Dendritic cell treated with granulocyte-macrophage colony-stimulating factor and Interleukin-4, amounts not matched to agents 40 ng/mL and 50 ng/mL, for 4 days (primary cell): ENCODE measurements at regions of chr14 and their contacts with region 1.

Region 1: DNA sequence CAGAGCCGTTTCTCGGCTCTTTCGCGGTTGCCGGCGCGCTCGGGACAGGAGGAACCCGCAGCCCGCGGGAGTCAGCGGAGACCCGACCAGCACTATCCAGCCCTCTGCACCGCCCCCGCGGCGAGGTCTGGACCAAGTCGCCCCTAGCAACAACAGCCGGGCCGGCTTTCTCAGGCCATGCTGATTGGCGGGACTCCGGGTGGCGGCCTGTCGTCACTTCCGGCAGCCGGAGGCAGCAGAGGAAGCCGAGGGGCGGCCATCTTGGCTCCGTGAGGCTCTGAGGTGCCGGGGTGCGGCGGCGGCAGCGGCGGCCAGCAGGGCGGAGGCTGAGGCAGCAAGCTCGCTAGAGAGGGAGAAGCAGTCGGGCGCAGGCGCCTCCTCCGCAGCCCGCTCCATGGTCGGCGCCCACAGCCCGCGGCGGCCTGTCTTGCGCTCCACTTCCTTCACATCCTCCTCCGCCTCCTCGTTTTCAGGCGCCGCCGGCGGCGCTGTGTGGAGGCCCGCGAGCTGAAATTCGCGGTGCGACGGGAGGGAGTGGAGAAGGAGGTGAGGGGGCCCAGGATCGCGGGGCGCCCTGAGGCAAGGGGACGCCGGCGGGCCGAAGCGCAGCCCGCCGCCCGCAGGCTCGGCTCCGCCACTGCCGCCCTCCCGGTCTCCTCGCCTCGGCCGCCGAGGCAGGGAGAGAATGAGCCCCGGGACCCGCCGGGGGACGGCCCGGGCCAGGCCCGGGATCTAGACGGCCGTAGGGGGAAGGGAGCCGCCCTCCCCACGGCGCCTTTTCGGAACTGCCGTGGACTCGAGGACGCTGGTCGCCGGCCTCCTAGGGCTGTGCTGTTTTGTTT is at the start of gene MARK3:
- H3K4me3 Mint-ChIP-seq: peak within 1 kb of the TSS; percentile 90
- H3K27ac Mint-ChIP-seq: peak within 1 kb of the TSS; percentile 91
- H3K4me1 Mint-ChIP-seq: peaks cover 44% of the 10 kb centered on the region
- H3K27me3 Mint-ChIP-seq: no peaks in the 10 kb centered on the region

Region 2: GRCh38 chr14:103333754-103334643 is 51.4 kb before region 1 on chr14 and contains the start of gene EIF5:
- intact Hi-C with region 1: loop called (anchors 2 kb)
- H3K4me3 Mint-ChIP-seq: peak within 1 kb of the TSS; percentile 84
- H3K27ac Mint-ChIP-seq: peak within 1 kb of the TSS; percentile 96
- H3K4me1 Mint-ChIP-seq: peaks cover 58% of the 10 kb centered on the region
- H3K27me3 Mint-ChIP-seq: no peaks in the 10 kb centered on the region

Region 3: GRCh38 chr14:103349982-103350381 is 35.4 kb before region 1 on chr14:
- intact Hi-C with region 1: loop called (anchors 5 kb)
- H3K4me3 Mint-ChIP-seq: no peak overlapping the region
- H3K27ac Mint-ChIP-seq: no peak overlapping the region
- H3K4me1 Mint-ChIP-seq: no peaks in the 10 kb centered on the region
- H3K27me3 Mint-ChIP-seq: peaks cover 7% of the 10 kb centered on the region

Region 4: GRCh38 chr14:103436533-103436932 is 51.2 kb after region 1 on chr14:
- intact Hi-C with region 1: no loop called
- H3K4me3 Mint-ChIP-seq: no peak overlapping the region
- H3K27ac Mint-ChIP-seq: no peak overlapping the region
- H3K4me1 Mint-ChIP-seq: peaks cover 22% of the 10 kb centered on the region
- H3K27me3 Mint-ChIP-seq: no peaks in the 10 kb centered on the region